HepG2 (cell line): ENCODE measurements at regions of chr16 and their contacts with region 1.

Region 1: DNA sequence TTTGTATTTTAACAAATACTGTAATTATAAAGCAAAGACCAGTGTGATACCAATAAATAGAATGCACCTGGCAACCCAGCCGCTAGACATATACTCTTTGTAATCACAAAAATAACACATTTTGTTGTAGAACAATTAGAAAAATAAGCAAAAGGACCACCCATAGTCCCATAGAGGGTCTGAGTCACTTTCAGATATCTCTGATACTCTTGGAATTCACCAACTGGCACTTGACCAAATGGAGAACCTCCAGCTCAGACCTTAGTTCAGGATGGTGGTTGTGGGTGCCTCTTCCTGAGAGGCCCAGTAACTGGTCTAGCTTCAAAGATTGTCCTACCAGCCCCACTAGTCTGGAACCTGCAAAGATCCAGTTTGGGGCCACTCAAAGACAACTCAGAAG is 789 bp upstream of the TERF2 start:
- DNase-seq: no peak
- ATAC-seq: no peak
- H3K4me3 ChIP-seq: no peak overlapping the region
- H3K27ac ChIP-seq: no peak overlapping the region
- H3K4me1 ChIP-seq: peaks cover 37% of the 10 kb centered on the region
- H3K27me3 ChIP-seq: no peaks in the 10 kb centered on the region; a peak in 2 of 5 replicates
- CTCF ChIP-seq: no peak
- EP300 ChIP-seq: no peak
- POLR2A ChIP-seq: no peak
- RAD21 ChIP-seq: no peak

Region 2: DNA sequence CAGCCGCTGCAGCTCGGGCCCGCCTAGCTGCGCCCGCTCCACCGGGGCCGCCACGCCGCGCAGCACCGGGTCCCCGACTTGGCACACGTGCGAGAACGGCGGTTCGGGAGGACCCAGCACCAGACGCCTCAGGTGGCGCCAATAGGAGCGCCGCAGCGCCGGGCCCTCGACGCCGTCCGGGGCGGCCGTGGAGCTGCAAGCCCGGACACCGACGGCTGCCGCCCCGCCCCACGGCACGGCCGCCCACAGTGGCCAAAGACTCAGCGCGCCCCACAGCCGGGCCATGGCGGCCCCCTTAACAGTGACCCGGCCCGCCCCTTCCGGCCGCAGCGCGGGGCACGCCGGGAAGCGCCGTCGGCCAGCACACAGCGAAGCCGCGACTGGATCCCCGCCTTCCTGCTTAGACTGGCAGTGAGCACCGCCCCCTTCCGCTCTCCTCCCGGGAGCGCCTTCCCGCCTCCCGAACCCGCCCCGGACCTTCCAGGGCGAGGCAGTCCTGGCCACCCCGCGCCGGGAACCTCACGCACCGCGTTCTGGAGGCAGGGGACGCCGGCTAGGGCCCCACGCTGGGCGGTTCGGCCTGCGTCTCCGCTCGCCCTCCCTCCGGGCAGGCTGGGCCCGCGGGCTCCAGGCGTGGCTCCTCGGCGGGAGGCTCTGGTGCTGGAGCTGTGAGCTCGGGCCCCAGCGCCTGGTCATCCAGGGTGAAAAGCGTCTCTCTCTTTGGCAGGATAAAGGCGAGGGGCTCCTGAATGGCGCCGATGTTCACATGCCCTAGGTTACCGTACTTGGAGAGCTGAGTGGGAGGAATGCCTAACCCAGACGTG is 56.1 kb before region 1 on chr16 and contains the start of gene PDF:
- CTCF ChIA-PET with region 1: no interaction called
- POLR2A ChIA-PET with region 1: no interaction called
- in situ Hi-C with region 1: no loop called
- intact Hi-C with region 1: loop called (anchors 1 kb)
- DNase-seq: peak; percentile 93
- ATAC-seq: peak; percentile 90
- H3K4me3 ChIP-seq: peak within 1 kb of the TSS; percentile 70 to 88 (median 84)
- H3K27ac ChIP-seq: peak within 1 kb of the TSS; percentile 87
- H3K4me1 ChIP-seq: peaks cover 49% of the 10 kb centered on the region
- H3K27me3 ChIP-seq: no peaks in the 10 kb centered on the region
- CTCF ChIP-seq: peak; percentile 65
- EP300 ChIP-seq: 0 out of 4 replicates have a peak, but pooled peaks of 1 of the 2 experiments have one; percentile 35
- POLR2A ChIP-seq: peak; percentile 79 to 96
- RAD21 ChIP-seq: no peak; the same call in none of the 2 replicates
- total RNA-seq, gene PDF: 26.8 and 48.8 TPM in 2 replicates

Region 3: DNA sequence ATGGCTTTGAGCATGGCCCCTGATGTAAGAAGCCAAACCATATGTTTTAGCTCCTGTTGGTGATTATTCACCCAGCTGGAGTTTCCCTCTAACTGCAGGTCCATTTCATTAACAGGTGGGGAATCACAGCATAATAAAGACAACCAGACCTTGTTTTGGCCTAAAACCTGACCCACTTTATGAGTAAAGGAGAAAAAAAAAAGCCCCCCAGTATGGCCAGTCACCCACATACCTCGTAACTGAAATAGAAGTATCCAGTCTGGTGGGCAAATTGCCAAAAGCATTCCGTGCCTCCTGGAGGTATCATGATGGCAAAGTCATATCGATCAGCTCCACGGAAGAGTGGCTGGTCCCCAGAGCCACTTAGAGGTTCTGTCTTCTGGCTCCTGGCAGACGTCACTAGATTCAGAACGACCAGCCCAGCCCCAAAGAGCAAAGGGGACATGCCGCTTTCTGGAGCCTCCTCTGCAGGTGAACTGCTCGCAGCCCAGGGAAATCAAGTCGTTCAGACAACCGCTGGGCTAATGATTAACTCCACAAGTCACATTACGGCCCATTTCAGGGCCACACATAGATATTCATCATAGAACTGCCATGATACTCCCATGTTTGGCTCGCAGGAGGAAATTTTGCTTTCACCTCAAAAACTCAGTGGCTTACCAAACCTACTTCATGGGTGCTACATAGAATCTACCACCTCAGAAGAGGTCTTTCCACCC is 35.1 kb before region 1 on chr16 and contains the start of gene TMED6:
- CTCF ChIA-PET with region 1: no interaction called
- POLR2A ChIA-PET with region 1: interaction called, 5 read pairs
- in situ Hi-C with region 1: no loop called
- intact Hi-C with region 1: loop called (anchors 5 kb)
- DNase-seq: peak; percentile 92
- ATAC-seq: peak; percentile 93
- H3K4me3 ChIP-seq: peak within 1 kb of the TSS; percentile 54 to 64 (median 61)
- H3K27ac ChIP-seq: peak within 1 kb of the TSS; percentile 39
- H3K4me1 ChIP-seq: peaks cover 24% of the 10 kb centered on the region
- H3K27me3 ChIP-seq: no peaks in the 10 kb centered on the region
- CTCF ChIP-seq: peak; percentile 22
- EP300 ChIP-seq: no peak
- POLR2A ChIP-seq: peak; percentile 33 to 72; a peak in 2 of 4 replicates
- RAD21 ChIP-seq: no peak
- total RNA-seq, gene TMED6: 6.4 and 14.4 TPM in 2 replicates

Region 4: DNA sequence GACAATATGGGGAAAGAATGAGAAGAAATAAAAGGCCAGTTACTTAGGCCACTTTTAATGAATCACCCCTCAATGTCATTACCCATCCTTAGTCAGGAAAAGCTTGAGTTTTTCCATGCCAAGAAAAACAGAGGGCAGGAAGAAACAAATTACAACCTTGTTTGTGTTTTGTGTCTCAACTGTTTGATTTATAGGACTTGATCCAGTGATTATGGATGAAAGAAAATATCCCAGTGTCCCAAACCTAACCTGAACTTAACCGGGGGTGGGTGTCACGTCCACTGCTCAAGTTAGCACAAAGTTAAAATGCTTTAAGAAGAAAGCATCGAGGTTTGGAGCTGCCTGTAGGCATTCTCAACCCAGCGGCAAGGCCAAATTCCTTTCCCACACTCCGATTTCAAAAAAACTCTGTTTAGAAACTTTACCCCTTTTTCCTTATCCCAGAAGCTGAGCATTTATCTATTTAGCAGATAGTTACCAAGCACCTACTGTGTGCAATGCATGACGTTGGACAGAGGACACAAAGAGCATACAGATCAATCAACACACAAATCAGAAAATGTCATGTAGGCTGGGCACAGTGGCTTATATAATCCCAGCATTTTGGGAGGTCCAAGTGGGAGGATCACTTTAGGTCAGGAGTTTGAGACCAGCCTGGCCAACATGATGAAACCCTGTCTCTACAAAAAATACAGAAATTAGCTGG is 23.8 kb after region 1 on chr16:
- CTCF ChIA-PET with region 1: no interaction called
- POLR2A ChIA-PET with region 1: no interaction called
- in situ Hi-C with region 1: no loop called
- intact Hi-C with region 1: no loop called
- DNase-seq: no peak
- ATAC-seq: no peak
- H3K4me3 ChIP-seq: no peak overlapping the region
- H3K27ac ChIP-seq: peak overlapping the region; percentile 2
- H3K4me1 ChIP-seq: peaks cover 73% of the 10 kb centered on the region
- H3K27me3 ChIP-seq: no peaks in the 10 kb centered on the region
- CTCF ChIP-seq: no peak
- EP300 ChIP-seq: no peak
- POLR2A ChIP-seq: no peak
- RAD21 ChIP-seq: no peak